ENCODE measurements at regions of chr1 and their contacts with region 1.

Region 1: DNA sequence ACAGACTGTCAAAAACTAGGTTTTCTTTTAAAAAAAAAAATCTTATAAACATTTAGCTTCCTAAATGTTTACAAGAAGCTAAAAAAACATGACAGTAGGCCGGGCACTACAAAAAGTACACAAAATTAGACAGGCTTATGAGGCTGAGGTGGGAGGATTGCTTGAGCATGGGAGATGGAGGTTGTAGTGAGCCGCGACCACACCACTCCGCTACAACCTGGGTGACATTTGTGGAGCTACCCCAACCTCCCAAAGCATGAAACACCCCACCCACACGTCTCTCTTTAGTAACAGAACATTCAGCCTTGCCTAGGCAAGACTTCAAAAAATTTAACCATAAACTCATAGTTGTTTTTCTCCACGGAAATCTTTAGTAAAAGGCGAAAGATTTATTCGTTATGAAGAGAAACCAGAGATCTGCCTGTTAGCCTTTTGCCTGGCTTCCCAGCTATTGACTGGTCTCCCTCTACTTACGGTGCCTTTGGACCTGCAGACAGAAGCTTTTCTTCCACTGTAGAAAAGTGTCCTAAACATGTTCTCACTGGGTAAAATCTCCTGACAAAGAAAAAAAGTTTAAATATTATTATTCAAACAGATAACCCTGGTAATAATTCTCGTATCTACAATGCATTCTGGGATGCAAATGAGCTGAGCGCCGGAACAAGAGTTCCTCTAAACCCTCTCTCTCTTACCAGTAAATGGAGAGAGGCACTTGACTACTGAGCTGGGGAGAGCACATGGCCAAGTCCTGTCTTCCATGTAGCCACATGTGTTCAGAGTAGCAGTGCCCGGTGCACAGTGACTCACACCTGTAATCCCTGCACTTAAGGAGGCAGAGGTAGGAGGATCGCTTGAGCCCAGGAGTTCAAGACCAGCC is 9.2 kb downstream of the RNU5D-1 start:
- DNase-seq: peak; percentile 91
- H3K4me3 Mint-ChIP-seq: peak overlapping the region; percentile 66
- H3K27ac Mint-ChIP-seq: peak overlapping the region; percentile 96
- H3K4me1 Mint-ChIP-seq: peaks cover 77% of the 10 kb centered on the region
- H3K27me3 Mint-ChIP-seq: peaks cover 4% of the 10 kb centered on the region

Region 2: DNA sequence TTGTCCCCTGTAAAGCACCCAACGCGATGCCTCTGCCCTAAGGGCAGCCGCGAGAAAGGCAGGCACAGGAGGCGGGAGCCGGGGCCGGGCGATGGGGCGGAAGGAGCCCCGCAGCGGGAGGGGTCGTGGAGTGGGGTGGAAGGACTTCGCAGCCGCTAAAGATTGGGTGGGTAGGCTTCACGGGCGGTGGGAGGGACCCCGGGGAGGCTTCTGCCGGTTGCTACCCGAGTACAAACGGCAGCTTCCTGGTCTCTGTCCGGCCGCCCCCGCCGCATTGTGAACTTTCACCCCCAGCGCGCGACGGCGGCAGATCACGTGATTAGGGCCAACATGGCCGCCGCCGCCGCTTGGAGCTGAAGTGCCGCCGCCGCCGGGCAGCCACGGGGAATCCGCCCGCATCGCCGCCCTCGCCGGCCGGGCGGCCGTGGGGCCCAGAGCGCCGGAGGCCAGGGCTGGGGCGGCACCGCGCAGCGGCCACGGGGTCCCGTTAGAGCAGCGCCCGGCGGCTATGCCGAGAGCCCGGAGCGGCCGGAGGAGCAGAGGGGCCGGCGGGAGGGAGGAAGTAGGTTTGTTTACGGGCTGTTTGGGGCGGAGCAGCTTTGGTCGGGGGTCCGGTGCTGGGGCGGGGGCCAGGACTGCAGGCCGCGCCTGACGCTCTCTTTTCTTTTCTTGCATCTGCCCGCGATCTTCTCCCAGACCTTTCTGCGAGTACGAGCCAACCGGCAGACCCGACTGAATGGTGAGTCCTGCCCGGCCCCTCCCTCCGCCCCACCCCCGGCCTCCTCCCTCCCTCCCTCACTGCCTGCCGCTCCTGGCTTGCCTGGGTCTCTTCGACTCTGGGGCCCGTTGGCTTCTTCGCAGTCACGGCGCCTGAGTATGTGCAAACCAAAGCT is 89.8 kb before region 1 on chr1:
- CTCF ChIA-PET with region 1: no interaction called
- POLR2A ChIA-PET with region 1: interaction called, 21 read pairs
- intact Hi-C with region 1: loop called (anchors 5 kb)
- DNase-seq: peak; percentile 94
- H3K4me3 Mint-ChIP-seq: peak overlapping the region; percentile 91
- H3K27ac Mint-ChIP-seq: peak overlapping the region; percentile 94
- H3K4me1 Mint-ChIP-seq: peaks cover 36% of the 10 kb centered on the region
- H3K27me3 Mint-ChIP-seq: no peaks in the 10 kb centered on the region

Region 3: DNA sequence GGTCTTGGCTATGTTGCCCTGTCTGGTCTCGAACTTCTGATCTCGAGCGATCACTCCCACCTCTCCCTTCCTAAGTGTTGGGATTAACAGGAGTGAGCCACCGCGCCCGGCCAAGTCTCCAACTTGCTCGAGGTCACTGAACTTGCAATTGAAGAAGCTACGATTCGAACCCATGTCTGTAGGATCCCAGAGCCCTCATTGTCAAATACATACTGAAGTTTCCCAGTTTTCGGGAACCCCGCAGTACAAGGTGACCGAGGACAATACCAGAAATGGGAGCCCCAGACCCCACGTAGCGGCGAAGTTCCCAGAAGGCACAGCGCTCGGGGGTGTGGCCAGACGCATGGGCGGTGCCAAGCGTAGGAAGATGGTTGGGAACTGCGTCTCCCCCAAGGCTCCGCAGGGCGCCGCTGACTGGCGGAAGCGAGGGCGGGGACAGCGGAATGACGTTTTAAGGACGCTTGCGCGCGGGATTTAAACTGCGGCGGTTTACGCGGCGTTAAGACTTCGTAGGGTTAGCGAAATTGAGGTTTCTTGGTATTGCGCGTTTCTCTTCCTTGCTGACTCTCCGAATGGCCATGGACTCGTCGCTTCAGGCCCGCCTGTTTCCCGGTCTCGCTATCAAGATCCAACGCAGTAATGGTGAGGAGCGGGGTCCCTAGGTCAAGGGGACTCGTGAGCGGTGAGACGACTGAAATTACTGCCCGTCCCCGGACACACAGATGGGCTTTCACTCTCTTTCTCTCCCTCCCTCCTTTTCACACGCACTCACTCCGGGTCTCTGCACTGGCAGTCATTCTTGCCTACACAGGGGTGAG is 17.8 kb after region 1 on chr1 and contains the start of gene KIF2C:
- CTCF ChIA-PET with region 1: no interaction called
- POLR2A ChIA-PET with region 1: interaction called, 14 read pairs
- intact Hi-C with region 1: loop called (anchors 1 kb)
- DNase-seq: peak; percentile 99
- H3K4me3 Mint-ChIP-seq: peak within 1 kb of the TSS; percentile 93
- H3K27ac Mint-ChIP-seq: peak within 1 kb of the TSS; percentile 93
- H3K4me1 Mint-ChIP-seq: peaks cover 24% of the 10 kb centered on the region
- H3K27me3 Mint-ChIP-seq: no peaks in the 10 kb centered on the region
- total RNA-seq, gene KIF2C: 107 to 113 TPM

Region 4: DNA sequence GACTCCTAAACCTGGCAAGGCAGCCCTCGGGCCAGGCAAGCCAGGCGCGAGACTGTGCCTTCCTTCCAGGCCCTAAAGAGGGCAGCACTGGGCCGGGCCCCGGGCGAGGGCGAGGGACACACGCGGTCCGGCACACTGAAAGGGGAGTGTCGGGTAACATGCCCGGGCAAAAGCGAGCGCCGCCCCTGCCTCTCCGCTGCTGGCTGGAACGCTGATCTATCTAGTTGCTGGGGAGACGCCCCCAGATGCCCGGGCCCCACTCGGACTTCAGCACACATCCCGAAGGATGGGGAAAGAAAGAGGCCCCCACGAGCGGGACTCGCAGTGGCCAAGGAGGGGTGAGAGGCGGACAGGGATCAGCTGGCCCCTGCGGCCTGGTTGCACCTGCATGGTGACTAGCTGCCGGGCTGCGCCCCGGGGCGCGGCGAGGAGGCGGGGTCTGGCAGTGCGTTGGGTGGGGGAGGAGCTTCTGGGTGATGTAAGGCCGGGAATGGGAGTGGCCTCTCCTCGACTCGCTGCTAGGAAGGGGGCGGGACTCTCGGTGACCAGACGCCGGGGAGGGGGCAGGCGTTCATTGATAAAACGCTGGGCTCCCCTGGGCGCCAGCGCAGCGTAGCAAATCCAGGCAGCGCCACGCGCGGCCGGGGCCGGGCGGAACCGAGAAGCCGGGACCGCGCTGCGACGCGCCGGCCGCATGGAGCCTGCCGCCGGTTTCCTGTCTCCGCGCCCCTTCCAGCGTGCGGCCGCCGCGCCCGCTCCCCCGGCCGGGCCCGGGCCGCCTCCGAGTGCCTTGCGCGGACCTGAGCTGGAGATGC is 78.3 kb after region 1 on chr1 and contains the start of gene PLK3:
- CTCF ChIA-PET with region 1: no interaction called
- POLR2A ChIA-PET with region 1: interaction called, 94 read pairs
- intact Hi-C with region 1: no loop called
- DNase-seq: peak; percentile 99
- H3K4me3 Mint-ChIP-seq: peak within 1 kb of the TSS; percentile 93
- H3K27ac Mint-ChIP-seq: peak within 1 kb of the TSS; percentile 95
- H3K4me1 Mint-ChIP-seq: peaks cover 34% of the 10 kb centered on the region
- H3K27me3 Mint-ChIP-seq: no peaks in the 10 kb centered on the region
- total RNA-seq, gene PLK3: 80.2 to 87.9 TPM

Region 5: GRCh38 chr1:44819608-44820327 is 98.0 kb after region 1 on chr1:
- CTCF ChIA-PET with region 1: interaction called, 8 read pairs
- POLR2A ChIA-PET with region 1: interaction called, 151 read pairs
- intact Hi-C with region 1: no loop called
- DNase-seq: peak; percentile 89
- H3K4me3 Mint-ChIP-seq: peak overlapping the region; percentile 89
- H3K27ac Mint-ChIP-seq: peak overlapping the region; percentile 99
- H3K4me1 Mint-ChIP-seq: peaks cover 42% of the 10 kb centered on the region
- H3K27me3 Mint-ChIP-seq: no peaks in the 10 kb centered on the region

Region 6: GRCh38 chr1:44870096-44870495 is 148.4 kb after region 1 on chr1:
- CTCF ChIA-PET with region 1: no interaction called
- POLR2A ChIA-PET with region 1: no interaction called
- intact Hi-C with region 1: no loop called
- DNase-seq: no peak
- H3K4me3 Mint-ChIP-seq: no peak overlapping the region
- H3K27ac Mint-ChIP-seq: no peak overlapping the region
- H3K4me1 Mint-ChIP-seq: no peaks in the 10 kb centered on the region
- H3K27me3 Mint-ChIP-seq: no peaks in the 10 kb centered on the region

Region 7: GRCh38 chr1:45339789-45340570 is 618.3 kb after region 1 on chr1 and contains the starts of genes MUTYH and TOE1:
- CTCF ChIA-PET with region 1: no interaction called
- POLR2A ChIA-PET with region 1: interaction called, 18 read pairs
- intact Hi-C with region 1: no loop called
- DNase-seq: peak; percentile 97
- H3K4me3 Mint-ChIP-seq: peak within 1 kb of the TSS; percentile 93
- H3K27ac Mint-ChIP-seq: peak within 1 kb of the TSS; percentile 98
- H3K4me1 Mint-ChIP-seq: peaks cover 34% of the 10 kb centered on the region
- H3K27me3 Mint-ChIP-seq: no peaks in the 10 kb centered on the region
- total RNA-seq, gene MUTYH: 49.2 to 51.8 TPM
- total RNA-seq, gene TOE1: 22.8 to 23.1 TPM

Measured in activated CD4-positive, alpha-beta memory T cell treated with anti-CD3 and anti-CD28 coated beads for 36 hours (primary cell).